PC-9 (cell line): ENCODE measurements at regions of chr1 and their contacts with region 1.

Region 1: GRCh38 chr1:28745653-28746173 is 9.0 kb downstream of the YTHDF2 start:
- DNase-seq: no peak
- H3K4me3 ChIP-seq: no peak overlapping the region
- H3K27ac ChIP-seq: no peak overlapping the region
- H3K4me1 ChIP-seq: peaks cover 7% of the 10 kb centered on the region; the same call in 1 of the 2 replicates
- H3K27me3 ChIP-seq: no peaks in the 10 kb centered on the region
- CTCF ChIP-seq: no peak

Region 2: DNA sequence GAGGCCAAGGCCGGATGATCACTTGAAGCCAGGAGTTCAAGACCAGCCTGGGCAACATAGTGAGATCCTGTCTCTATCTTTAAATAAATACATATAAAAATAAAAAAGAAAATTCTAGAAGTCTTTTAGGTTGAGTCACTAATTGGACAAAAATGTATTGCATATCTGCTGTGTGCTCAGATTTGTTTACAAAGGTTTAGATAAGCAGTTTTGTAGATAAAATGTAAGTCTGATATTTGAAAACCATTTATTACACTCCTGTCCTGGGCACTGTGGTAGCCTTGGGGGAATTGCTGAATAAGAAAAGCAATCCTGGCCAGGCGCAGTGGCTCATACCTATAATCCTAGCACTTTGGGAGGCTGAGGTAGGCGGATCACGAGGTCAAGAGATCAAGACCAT is 65.6 kb before region 1 on chr1:
- CTCF ChIA-PET with region 1: no interaction called
- POLR2A ChIA-PET with region 1: interaction called, 12 read pairs
- intact Hi-C with region 1: no loop called
- DNase-seq: no peak
- H3K4me3 ChIP-seq: no peak overlapping the region
- H3K27ac ChIP-seq: no peak overlapping the region
- H3K4me1 ChIP-seq: 0 out of 2 replicates have a peak, but pooled peaks cover 2% of the 10 kb centered on the region
- H3K27me3 ChIP-seq: no peaks in the 10 kb centered on the region
- CTCF ChIP-seq: no peak